ENCODE measurements at regions of chr1 and their contacts with region 1.

Region 1: DNA sequence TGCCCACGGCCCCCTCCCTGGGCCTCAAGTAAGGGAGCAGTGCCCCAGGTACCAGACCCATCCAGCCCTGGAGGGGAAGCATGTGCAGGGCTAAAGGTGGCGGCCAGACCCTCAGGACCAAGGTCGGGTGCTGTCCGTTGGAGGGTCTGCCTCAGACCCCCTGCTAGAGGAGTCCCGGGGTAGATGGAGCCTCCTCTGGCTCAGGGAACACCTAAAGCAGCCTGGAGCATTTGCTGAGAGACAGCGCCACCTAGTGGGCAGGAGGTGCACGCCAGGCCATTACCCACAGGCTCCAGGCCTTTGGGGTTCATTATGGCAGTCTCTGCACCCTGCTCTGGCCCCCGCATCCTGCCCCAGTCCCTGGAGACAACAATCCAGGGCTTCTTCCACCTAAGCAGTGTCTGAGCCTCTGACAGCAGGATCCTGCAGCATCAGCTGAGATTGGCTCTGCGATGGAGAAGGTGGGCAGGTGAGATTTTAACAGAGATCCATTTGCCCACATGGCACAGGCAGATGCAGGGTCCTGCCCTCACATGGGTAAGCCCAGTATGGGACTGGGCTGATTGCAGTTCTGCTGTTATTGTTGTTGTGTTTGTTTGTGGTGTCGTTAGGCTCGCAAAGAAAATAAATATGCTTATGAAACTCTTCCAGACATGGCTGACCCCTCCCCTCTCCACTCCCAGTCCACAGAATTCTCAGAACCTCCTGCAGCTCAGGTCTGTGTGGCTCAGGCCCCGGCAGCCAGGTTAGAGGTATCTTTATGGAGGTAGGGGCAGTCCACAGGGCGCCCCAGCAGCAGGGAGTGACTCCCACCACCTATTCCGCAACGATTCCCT is 42.4 kb downstream of the CTNNBIP1 start:
- DNase-seq: peak; percentile 90
- ATAC-seq: peak; percentile 72

Region 2: GRCh38 chr1:9629445-9630201 is 238.0 kb before region 1 on chr1:
- intact Hi-C with region 1: loop called (anchors 1 kb)
- DNase-seq: peak; percentile 86
- ATAC-seq: peak; percentile 47

Region 3: DNA sequence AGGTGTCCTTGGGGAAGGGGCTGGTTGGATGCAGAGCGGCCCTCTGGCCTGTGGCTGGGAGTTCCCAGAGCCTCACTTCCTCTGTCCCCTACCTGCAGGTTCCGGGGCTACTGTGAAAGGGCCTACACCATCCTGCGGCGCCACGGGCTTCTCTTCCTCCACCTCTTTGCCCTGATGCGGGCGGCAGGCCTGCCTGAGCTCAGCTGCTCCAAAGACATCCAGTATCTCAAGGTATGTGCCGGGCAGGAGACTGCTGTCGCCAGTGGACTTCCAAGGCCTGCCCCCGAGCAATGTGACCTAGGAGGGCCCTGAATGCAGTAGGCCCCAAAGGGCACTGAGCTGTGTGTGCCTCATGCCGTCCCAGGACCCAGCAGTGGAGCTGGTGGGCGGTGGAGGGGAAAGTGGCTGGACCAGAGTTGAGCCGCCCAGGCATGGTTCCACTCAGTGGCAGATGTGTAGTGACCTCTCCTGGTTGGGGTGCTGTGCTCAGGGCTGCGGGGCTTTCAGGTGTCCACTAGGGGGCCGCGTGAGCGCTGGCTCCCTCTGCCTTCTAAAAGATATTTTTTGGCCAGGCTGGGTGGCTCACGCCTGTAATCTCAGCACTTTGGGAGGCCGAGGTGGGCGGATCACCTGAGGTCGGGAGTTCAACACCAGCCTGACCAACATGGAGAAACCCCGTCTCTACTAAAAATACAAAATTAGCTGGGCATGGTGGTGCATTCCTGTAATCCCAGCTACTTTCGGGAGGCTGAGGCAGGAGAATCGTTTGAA is 142.7 kb before region 1 on chr1:
- intact Hi-C with region 1: loop called (anchors 2 kb)
- DNase-seq: peak; percentile 85
- ATAC-seq: peak; percentile 56

Region 4: DNA sequence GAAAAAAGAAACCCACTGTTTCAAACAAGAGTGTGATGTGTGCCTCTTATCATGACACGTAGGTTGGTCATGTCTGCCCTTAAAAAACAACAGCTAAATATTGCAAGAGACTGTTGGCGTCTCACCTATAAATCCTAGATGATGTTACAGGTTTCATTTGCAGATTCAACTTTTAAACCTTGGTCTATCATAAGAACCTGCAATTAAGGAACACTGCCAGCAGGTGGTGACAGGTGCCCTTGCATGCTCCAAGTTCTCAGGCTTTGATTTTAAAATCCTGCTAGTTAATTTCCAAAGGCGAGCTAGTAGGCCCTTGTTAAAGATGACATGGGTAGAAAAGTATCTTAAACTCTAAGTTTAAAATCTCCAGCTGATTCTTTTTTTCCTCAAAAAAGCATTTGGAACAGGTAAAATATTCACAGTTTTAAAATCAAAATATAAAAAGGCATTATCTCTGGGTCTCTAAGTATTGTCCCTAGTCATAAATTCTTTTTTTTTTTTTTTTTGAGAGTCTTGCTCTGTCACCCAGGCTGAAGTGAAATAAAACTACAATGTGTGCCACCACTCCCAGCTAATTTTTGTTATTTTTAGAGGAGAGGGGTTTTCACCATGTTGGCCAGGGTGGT is 83.0 kb before region 1 on chr1:
- intact Hi-C with region 1: loop called (anchors 1 kb)
- DNase-seq: no peak
- ATAC-seq: no peak

Region 5: DNA sequence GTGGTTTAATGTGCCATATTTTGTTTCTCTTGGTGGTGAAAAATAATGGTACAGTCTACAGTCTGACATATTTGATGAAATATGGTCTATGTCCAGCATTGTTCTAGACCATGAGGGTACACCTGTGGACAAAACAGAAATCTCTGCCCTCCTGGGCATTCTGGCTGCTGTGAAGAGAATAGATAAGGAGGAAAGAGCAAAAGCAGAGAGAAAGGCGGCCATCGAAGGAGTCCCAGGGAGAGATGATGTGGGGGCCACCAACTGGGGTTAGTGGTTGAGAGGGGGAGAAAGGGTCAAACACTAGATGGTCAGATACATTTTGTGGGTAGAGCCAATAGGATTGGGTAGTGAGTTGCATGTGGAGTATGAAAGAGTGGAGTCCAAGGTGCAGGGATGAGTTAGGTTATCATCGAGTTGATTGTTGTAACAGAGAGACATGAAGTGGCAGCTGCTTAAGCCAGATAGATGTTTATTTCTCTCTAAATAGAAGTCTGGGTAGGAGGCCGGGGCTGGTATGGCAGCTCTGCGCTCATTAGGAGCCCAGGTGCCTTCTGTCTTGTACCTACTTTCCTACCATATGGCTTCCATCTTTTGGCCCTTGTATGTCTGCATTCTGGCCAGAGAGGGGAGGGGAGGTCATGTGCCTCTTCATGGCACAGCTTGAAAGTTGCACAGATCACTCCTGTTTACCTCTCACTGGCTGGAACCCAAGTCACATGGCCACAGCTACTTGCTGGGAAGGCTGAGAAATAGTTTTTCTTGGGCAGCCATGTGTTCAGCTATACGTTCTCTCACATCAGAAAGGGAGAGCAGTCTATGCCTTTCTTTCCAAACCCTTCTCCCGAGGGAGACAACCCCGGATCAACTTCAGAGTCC is 178.1 kb after region 1 on chr1:
- intact Hi-C with region 1: no loop called
- DNase-seq: no peak
- ATAC-seq: peak; percentile 49